Dendritic cell treated with granulocyte-macrophage colony-stimulating factor and Interleukin-4, amounts not matched to agents 40 ng/mL and 50 ng/mL, for 4 days (primary cell): ENCODE measurements at regions of chr21 and their contacts with region 1.

Region 1: DNA sequence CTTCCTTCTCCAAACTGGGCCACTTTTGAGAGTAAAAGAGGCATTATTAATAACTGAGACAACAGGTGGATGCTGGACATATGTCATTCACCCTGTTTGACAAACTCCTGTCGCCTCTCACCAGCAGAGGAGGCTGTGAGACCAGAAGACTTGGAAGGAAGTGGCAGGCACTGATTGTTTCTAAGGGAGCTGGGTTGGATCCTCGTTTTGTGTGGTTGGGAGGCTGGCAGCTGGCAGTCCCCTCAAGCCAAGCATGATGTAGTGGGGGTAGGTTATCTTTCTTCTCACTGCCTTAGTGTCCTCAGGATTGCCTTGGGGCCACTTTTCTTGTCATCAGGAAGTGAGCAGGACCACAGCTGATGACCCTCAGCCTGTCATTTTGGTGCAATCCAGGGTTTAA is 86.5 kb upstream of the KCNJ15 start:
- H3K4me3 Mint-ChIP-seq: no peak overlapping the region
- H3K27ac Mint-ChIP-seq: peak overlapping the region; percentile 25
- H3K4me1 Mint-ChIP-seq: peaks cover 14% of the 10 kb centered on the region
- H3K27me3 Mint-ChIP-seq: peaks cover 10% of the 10 kb centered on the region

Region 2: GRCh38 chr21:38219049-38219628 is 48.9 kb after region 1 on chr21:
- intact Hi-C with region 1: loop called (anchors 5 kb)
- H3K4me3 Mint-ChIP-seq: no peak overlapping the region
- H3K27ac Mint-ChIP-seq: no peak overlapping the region
- H3K4me1 Mint-ChIP-seq: peaks cover 32% of the 10 kb centered on the region
- H3K27me3 Mint-ChIP-seq: peaks cover 2% of the 10 kb centered on the region